Activated B cell treated with CpG ODN at 0.5 μM for 24 hours (primary cell): ENCODE measurements at regions of chr18 and their contacts with region 1.

Region 1: GRCh38 chr18:13611601-13612195 is 114.7 kb downstream of the FAM210A start:
- DNase-seq: peak; percentile 46
- ATAC-seq: no peak
- H3K4me3 Mint-ChIP-seq: peak overlapping the region; percentile 95
- H3K27ac Mint-ChIP-seq: peak overlapping the region; percentile 99
- H3K4me1 Mint-ChIP-seq: peaks cover 89% of the 10 kb centered on the region
- H3K27me3 Mint-ChIP-seq: no peaks in the 10 kb centered on the region
- CTCF ChIP-seq: no peak

Region 2: GRCh38 chr18:11851146-11851805 is 1760.4 kb before region 1 on chr18 and contains the start of gene CHMP1B:
- CTCF ChIA-PET with region 1: no interaction called
- POLR2A ChIA-PET with region 1: no interaction called
- intact Hi-C with region 1: loop called (anchors 5 kb)
- DNase-seq: peak; percentile 98
- ATAC-seq: peak; percentile 94
- H3K4me3 Mint-ChIP-seq: peak within 1 kb of the TSS; percentile 100
- H3K27ac Mint-ChIP-seq: peak within 1 kb of the TSS; percentile 99
- H3K4me1 Mint-ChIP-seq: peaks cover 52% of the 10 kb centered on the region
- H3K27me3 Mint-ChIP-seq: no peaks in the 10 kb centered on the region
- CTCF ChIP-seq: no peak
- total RNA-seq, gene CHMP1B: 28.5 and 29.4 TPM in 2 replicates

Region 3: DNA sequence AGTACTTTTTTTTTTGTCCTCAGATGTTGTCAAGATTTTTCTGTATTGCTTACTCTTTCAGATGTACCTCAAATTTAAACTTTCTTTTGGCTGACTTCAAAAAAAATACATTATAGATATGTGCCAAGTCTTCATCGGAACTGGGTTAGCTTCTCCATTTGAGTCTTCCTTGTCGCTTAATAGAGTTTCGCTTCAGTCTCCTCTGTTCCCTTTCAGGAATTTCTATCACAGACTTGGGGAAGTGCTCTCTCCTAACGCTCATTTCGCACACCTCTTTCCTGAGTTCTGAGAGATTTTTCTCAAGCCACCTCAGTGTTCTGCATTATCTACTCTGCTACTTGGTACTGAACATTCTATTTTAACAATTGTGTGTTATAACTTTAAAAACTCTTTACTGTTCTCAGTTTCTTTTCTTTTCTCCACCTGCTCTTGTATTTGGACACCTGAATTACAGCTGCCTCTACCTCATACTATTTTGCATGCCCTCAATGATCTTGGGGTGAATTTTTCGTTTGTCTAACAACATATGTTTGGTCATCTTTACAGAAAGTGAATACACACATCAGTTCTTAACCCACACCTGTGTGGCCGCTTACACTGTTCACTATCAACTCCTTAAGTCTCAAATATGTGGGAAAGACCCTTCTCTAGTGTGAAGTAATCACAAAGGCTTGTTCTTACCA is 744.1 kb before region 1 on chr18:
- CTCF ChIA-PET with region 1: no interaction called
- POLR2A ChIA-PET with region 1: no interaction called
- intact Hi-C with region 1: no loop called
- DNase-seq: no peak
- ATAC-seq: no peak
- H3K4me3 Mint-ChIP-seq: no peak overlapping the region
- H3K27ac Mint-ChIP-seq: no peak overlapping the region
- H3K4me1 Mint-ChIP-seq: peaks cover 44% of the 10 kb centered on the region
- H3K27me3 Mint-ChIP-seq: no peaks in the 10 kb centered on the region
- CTCF ChIP-seq: no peak

Region 4: DNA sequence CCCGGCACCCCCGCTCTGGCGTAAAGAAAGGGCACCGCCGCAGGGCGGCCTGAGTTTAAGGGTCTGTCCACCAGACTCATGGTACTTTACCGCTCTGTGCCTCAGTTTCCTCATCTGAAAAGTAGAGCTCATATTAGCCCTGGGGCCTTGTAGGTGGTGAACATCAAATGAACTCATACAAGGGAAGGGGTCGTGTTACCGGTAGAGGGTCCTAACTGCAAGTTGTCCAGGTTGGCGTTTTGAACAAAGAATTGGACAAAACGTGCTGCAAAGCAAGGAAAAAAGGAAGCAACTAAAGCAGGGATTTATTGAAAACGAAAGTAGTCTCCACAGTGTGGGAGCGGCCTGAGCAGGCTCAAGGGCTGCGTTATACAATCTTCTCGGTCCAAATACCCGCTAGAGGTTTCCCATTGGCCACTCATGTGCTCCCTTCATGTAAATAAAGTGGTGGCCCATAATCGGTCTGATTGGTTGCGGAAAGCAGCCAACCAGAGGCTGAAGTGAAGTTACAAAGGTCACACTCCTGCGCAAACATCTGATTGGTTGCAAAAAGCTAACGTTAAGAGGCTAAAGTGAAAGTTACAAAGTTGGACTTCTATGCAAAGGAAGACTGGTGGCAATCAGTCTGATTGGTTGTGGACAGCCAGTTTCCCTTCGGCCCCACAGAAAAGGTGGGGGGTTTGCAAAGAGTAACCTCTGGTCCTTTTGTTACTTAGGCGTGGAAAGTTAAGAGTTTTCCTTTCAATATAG is 473.9 kb before region 1 on chr18:
- CTCF ChIA-PET with region 1: no interaction called
- POLR2A ChIA-PET with region 1: interaction called, 6 read pairs
- intact Hi-C with region 1: loop called (anchors 5 kb)
- DNase-seq: peak; percentile 43
- ATAC-seq: peak; percentile 87
- H3K4me3 Mint-ChIP-seq: peak overlapping the region; percentile 98
- H3K27ac Mint-ChIP-seq: peak overlapping the region; percentile 97
- H3K4me1 Mint-ChIP-seq: peaks cover 23% of the 10 kb centered on the region
- H3K27me3 Mint-ChIP-seq: no peaks in the 10 kb centered on the region
- CTCF ChIP-seq: no peak

Region 5: GRCh38 chr18:13539050-13539449 is 72.6 kb before region 1 on chr18:
- CTCF ChIA-PET with region 1: no interaction called
- POLR2A ChIA-PET with region 1: interaction called, 11 read pairs
- intact Hi-C with region 1: no loop called
- DNase-seq: no peak
- ATAC-seq: peak; percentile 81
- H3K4me3 Mint-ChIP-seq: peak overlapping the region; percentile 75
- H3K27ac Mint-ChIP-seq: peak overlapping the region; percentile 85
- H3K4me1 Mint-ChIP-seq: peaks cover 44% of the 10 kb centered on the region
- H3K27me3 Mint-ChIP-seq: no peaks in the 10 kb centered on the region
- CTCF ChIP-seq: no peak

Region 6: DNA sequence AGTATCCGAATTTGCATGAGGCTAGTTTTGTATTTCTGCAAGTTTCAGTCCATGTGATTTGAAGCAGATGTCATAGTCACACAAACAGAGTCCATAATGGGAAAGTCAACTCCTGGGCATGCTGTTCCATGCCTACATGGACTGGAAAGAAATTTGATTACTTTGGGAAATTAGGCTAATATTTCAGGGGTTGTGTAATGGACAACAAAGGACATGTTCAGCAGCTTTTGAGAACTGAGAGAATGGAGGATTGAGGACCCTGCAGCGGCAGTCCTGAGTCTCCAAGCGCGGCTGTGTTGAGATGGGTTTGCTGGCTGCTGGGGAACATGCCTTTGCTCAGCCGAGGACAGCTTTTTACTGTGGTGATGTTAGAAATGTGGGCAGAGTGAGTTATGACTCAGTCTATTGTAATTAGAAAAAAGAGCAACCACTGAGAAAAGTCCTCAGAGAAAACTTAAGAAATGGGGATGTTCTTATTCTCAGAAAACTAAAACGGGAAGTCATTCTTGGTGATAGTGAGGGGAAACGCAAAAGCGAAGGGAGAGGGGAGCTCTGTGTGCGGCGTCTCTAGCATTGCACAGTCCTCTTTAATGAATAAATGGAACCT is 34.5 kb before region 1 on chr18:
- CTCF ChIA-PET with region 1: interaction called, 17 read pairs
- POLR2A ChIA-PET with region 1: interaction called, 1,007 read pairs
- intact Hi-C with region 1: no loop called
- DNase-seq: no peak
- ATAC-seq: peak; percentile 86
- H3K4me3 Mint-ChIP-seq: peak overlapping the region; percentile 68
- H3K27ac Mint-ChIP-seq: peak overlapping the region; percentile 86
- H3K4me1 Mint-ChIP-seq: peaks cover 49% of the 10 kb centered on the region
- H3K27me3 Mint-ChIP-seq: no peaks in the 10 kb centered on the region
- CTCF ChIP-seq: no peak

Region 7: GRCh38 chr18:13629841-13630715 is 18.4 kb after region 1 on chr18:
- CTCF ChIA-PET with region 1: interaction called, 19 read pairs
- POLR2A ChIA-PET with region 1: interaction called, 33 read pairs
- intact Hi-C with region 1: loop called (anchors 1 kb)
- DNase-seq: no peak
- ATAC-seq: peak; percentile 95
- H3K4me3 Mint-ChIP-seq: peak overlapping the region; percentile 17
- H3K27ac Mint-ChIP-seq: peak overlapping the region; percentile 63
- H3K4me1 Mint-ChIP-seq: peaks cover 24% of the 10 kb centered on the region
- H3K27me3 Mint-ChIP-seq: no peaks in the 10 kb centered on the region
- CTCF ChIP-seq: peak; percentile 68

Region 8: GRCh38 chr18:13943338-13943737 is 331.6 kb after region 1 on chr18:
- CTCF ChIA-PET with region 1: no interaction called
- POLR2A ChIA-PET with region 1: no interaction called
- intact Hi-C with region 1: no loop called
- DNase-seq: no peak
- ATAC-seq: no peak
- H3K4me3 Mint-ChIP-seq: no peak overlapping the region
- H3K27ac Mint-ChIP-seq: no peak overlapping the region
- H3K4me1 Mint-ChIP-seq: peaks cover 6% of the 10 kb centered on the region
- H3K27me3 Mint-ChIP-seq: no peaks in the 10 kb centered on the region
- CTCF ChIP-seq: no peak